T-cell (primary cell): ENCODE measurements at regions of chr9 and their contacts with region 1.

Region 1: GRCh38 chr9:20701060-20701459 is 17.0 kb downstream of the FOCAD start:
- DNase-seq: no peak
- ATAC-seq: no peak
- H3K4me3 ChIP-seq: no peak overlapping the region
- H3K4me3 Mint-ChIP-seq: no peak overlapping the region
- H3K27ac ChIP-seq: no peak overlapping the region
- H3K27ac Mint-ChIP-seq: no peak overlapping the region
- H3K4me1 ChIP-seq: no peaks in the 10 kb centered on the region
- H3K4me1 Mint-ChIP-seq: peaks cover 10 to 21% (median 11%) of the 10 kb centered on the region in 3 donors
- H3K27me3 ChIP-seq: no peaks in the 10 kb centered on the region
- H3K27me3 Mint-ChIP-seq: no peaks in the 10 kb centered on the region

Region 2: DNA sequence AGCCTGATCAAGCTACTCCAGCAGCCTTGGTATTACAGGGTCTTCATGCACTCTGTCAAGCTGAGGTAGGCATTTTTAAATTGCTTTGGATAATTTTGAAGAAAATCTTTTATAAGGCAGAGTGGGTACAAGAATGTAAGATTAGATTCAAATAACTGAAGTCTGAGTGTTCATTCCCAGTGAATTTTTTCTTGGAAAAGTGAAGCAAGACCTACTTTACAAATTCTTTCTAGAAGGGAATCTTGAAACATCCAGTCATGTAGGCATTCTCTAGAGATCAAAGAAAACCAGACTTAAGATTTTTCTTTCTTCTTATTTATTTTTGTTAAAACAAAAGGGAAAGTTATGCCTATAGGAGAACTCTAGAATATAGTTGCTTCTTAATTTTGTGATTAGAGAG is 122.0 kb after region 1 on chr9:
- CTCF ChIA-PET with region 1: interaction called in 1 of 2 experiments, 10 read pairs
- POLR2A ChIA-PET with region 1: no interaction called
- DNase-seq: no peak
- ATAC-seq: no peak
- H3K4me3 ChIP-seq: no peak overlapping the region
- H3K4me3 Mint-ChIP-seq: no peak overlapping the region
- H3K27ac ChIP-seq: no peak overlapping the region
- H3K27ac Mint-ChIP-seq: no peak overlapping the region
- H3K4me1 ChIP-seq: no peaks in the 10 kb centered on the region
- H3K4me1 Mint-ChIP-seq: no peaks in the 10 kb centered on the region
- H3K27me3 ChIP-seq: no peaks in the 10 kb centered on the region
- H3K27me3 Mint-ChIP-seq: no peaks in the 10 kb centered on the region